PC-9 (cell line): ENCODE measurements at regions of chr6 and their contacts with region 1.

Region 1: GRCh38 chr6:1952726-1953360 is 292.6 kb downstream of the GMDS start:
- DNase-seq: peak; percentile 69 to 94
- H3K4me3 ChIP-seq: peak overlapping the region; percentile 42; the same call in 1 of the 2 replicates
- H3K27ac ChIP-seq: peak overlapping the region; percentile 96
- H3K4me1 ChIP-seq: peaks cover 19% of the 10 kb centered on the region
- H3K27me3 ChIP-seq: no peaks in the 10 kb centered on the region
- CTCF ChIP-seq: no peak

Region 2: GRCh38 chr6:1893470-1894130 is 59.2 kb before region 1 on chr6:
- CTCF ChIA-PET with region 1: no interaction called
- POLR2A ChIA-PET with region 1: no interaction called
- intact Hi-C with region 1: loop called (anchors 2 kb)
- DNase-seq: no peak
- H3K4me3 ChIP-seq: no peak overlapping the region
- H3K27ac ChIP-seq: no peak overlapping the region
- H3K4me1 ChIP-seq: peaks cover 16% of the 10 kb centered on the region
- H3K27me3 ChIP-seq: no peaks in the 10 kb centered on the region
- CTCF ChIP-seq: no peak

Region 3: DNA sequence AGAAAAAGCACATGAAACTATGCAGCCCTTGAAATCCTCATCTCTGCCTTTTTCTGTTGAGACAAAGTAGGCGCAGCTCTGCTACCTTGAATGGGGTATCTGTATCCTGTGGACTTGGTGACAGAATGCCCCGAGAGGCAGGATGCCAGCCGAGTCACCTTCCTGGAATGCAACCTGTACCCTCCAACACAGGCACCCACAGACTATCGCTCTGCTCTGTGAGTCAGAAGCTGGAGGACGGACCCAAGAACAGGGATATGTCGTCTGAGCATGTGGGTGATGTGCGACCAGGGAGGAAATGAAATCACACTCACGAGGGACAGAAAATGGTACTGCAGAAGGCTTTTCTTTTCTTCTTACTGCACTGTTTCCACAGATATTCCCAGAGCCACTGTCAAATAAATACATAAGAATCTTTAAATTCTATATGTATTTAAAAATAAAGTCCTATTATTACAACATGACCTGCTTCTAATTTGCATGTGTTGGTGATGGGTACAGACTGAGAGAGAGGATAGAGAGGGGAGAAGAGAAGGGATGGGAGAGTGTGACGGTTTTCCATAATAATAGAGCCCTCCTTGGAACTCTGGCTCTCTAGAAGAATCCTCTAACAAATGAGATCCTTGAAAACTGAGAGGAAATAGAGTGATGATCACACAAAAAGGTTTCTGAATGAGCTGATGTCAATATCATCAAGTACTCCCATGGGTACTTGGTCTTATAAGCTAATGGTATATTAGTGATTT is 35.0 kb before region 1 on chr6:
- CTCF ChIA-PET with region 1: no interaction called
- POLR2A ChIA-PET with region 1: no interaction called
- intact Hi-C with region 1: loop called (anchors 2 kb)
- DNase-seq: peak; percentile 91 to 94
- H3K4me3 ChIP-seq: no peak overlapping the region
- H3K27ac ChIP-seq: peak overlapping the region; percentile 89
- H3K4me1 ChIP-seq: peaks cover 30% of the 10 kb centered on the region
- H3K27me3 ChIP-seq: no peaks in the 10 kb centered on the region
- CTCF ChIP-seq: no peak

Region 4: DNA sequence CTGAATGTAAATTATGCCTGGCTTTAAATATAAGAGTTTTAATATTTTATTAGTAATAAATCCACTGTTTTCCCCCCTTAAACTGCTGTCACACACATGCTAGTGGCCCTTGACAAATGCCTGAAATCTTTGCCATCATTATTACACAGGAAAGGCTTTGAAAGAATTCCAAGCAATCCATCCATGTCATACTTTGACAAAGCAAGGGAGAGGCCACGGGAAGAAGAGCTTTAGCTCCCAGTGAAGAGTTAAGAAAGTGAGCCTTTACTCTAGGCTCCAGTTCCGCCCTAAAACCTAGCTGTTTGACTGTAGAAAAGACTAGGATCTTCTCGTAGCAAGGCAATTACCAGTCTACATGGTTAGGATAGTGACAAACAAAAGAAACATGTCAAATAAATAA is 144.6 kb after region 1 on chr6:
- CTCF ChIA-PET with region 1: no interaction called
- POLR2A ChIA-PET with region 1: no interaction called
- intact Hi-C with region 1: loop called (anchors 10 kb)
- DNase-seq: no peak
- H3K4me3 ChIP-seq: no peak overlapping the region
- H3K27ac ChIP-seq: no peak overlapping the region
- H3K4me1 ChIP-seq: no peaks in the 10 kb centered on the region
- H3K27me3 ChIP-seq: no peaks in the 10 kb centered on the region
- CTCF ChIP-seq: no peak